ENCODE measurements at regions of chr11 and their contacts with region 1.

Region 1: DNA sequence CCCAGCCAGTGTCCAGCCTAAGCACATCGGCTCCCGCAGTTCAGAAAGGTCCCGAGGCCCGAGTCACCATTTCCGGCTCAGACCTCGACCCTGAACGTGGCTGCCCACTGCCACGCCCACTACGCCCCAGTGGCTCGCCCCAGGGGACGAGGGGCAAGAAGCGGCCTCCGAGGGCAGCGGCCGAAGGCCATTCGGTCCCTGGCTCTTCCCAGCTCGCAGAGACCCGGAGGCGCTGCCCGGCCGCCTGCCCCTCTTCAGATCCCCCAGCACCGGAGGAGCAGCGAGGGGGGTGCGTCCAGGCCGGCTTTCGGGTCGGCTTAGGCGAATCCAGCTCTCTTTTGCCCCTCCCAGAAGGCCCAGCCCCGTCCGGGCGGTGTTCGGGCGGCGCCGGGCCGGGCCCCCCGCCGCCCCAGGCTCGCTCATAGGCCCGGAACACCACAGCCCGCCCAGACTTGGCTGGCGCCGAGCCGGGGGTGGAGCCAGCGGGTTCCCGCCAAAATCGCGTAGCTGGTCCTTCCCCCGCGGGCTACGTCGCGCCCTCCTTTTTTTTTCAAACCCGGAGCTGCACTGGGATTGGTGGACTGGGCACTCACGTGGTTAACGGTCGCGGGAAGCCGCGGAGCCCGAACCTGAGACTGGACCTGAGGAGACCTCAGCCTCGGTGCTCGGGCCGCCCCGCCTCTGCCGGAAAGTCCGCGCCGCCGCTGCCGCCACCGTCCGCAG is at the start of gene WEE1:
- DNase-seq: peak; percentile 99
- ATAC-seq: peak; percentile 94
- H3K4me3 Mint-ChIP-seq: peak within 1 kb of the TSS; percentile 94
- H3K27ac Mint-ChIP-seq: peak within 1 kb of the TSS; percentile 82
- H3K4me1 Mint-ChIP-seq: peaks cover 33% of the 10 kb centered on the region
- H3K27me3 Mint-ChIP-seq: peaks cover 3% of the 10 kb centered on the region
- total RNA-seq, gene WEE1: 44.8 to 46.5 TPM

Region 2: GRCh38 chr11:8682303-8683114 is 890.7 kb before region 1 on chr11 and contains the starts of genes RPL27A and TRIM66:
- CTCF ChIA-PET with region 1: no interaction called
- POLR2A ChIA-PET with region 1: no interaction called
- intact Hi-C with region 1: loop called in 1 of 2 experiments (anchors 1 kb)
- DNase-seq: peak; percentile 99
- ATAC-seq: peak; percentile 96
- H3K4me3 Mint-ChIP-seq: peak within 1 kb of the TSS; percentile 97
- H3K27ac Mint-ChIP-seq: peak within 1 kb of the TSS; percentile 98
- H3K4me1 Mint-ChIP-seq: peaks cover 46% of the 10 kb centered on the region
- H3K27me3 Mint-ChIP-seq: no peaks in the 10 kb centered on the region
- total RNA-seq, gene RPL27A: 688 to 1,021 TPM
- total RNA-seq, gene TRIM66: 18.3 to 19.5 TPM

Region 3: GRCh38 chr11:9314291-9315036 is 258.7 kb before region 1 on chr11 and contains the start of gene TMEM41B:
- CTCF ChIA-PET with region 1: no interaction called
- POLR2A ChIA-PET with region 1: interaction called, 5 read pairs
- intact Hi-C with region 1: loop called in 1 of 2 experiments (anchors 1 kb)
- DNase-seq: peak; percentile 100
- ATAC-seq: peak; percentile 95
- H3K4me3 Mint-ChIP-seq: peak within 1 kb of the TSS; percentile 99
- H3K27ac Mint-ChIP-seq: peak within 1 kb of the TSS; percentile 99
- H3K4me1 Mint-ChIP-seq: peaks cover 36% of the 10 kb centered on the region
- H3K27me3 Mint-ChIP-seq: peaks cover 11% of the 10 kb centered on the region
- total RNA-seq, gene TMEM41B: 20.2 to 29.3 TPM

Region 4: DNA sequence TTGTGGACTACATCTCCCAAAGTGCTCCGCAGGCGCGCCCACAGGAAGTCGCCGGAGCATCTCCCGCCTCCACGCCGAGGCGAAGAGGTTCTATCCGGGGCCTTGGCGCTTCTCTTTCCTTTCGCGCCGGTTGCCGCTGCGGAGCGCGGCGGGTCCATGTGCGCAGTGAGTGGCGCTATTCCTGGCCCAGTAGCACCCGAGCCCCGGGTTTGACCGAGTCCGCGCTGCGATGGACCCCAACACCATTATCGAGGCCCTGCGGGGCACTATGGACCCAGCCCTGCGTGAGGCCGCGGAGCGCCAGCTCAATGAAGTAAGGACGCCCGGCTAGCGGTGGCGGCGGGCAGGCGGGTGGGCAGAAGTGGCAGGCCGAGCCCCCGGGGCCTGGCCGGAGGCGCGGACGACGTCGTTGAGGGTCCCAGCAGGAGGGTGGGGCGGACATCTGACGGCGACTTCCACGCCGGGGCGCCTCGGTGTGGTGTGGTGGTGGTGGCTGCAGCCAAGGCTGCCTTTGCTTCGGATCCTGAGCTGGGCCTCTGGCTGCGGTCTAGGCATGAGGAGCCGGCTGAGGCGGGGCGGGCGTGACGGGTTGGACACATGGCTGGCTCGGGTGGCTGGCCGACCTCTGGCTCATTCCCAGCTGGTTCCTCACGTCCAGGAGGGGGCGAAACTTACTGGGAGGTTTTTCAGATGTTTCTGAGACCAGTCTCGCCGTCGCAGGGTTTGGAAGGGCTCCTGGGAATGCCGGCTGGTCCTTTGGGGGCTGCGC is 188.5 kb before region 1 on chr11 and contains the start of gene IPO7:
- CTCF ChIA-PET with region 1: no interaction called
- POLR2A ChIA-PET with region 1: interaction called, 4 read pairs
- intact Hi-C with region 1: loop called in 1 of 2 experiments (anchors 2 kb)
- DNase-seq: peak; percentile 96
- ATAC-seq: peak; percentile 98
- H3K4me3 Mint-ChIP-seq: peak within 1 kb of the TSS; percentile 96
- H3K27ac Mint-ChIP-seq: peak within 1 kb of the TSS; percentile 96
- H3K4me1 Mint-ChIP-seq: peaks cover 26% of the 10 kb centered on the region
- H3K27me3 Mint-ChIP-seq: no peaks in the 10 kb centered on the region
- total RNA-seq, gene IPO7: 155 to 181 TPM

Region 5: DNA sequence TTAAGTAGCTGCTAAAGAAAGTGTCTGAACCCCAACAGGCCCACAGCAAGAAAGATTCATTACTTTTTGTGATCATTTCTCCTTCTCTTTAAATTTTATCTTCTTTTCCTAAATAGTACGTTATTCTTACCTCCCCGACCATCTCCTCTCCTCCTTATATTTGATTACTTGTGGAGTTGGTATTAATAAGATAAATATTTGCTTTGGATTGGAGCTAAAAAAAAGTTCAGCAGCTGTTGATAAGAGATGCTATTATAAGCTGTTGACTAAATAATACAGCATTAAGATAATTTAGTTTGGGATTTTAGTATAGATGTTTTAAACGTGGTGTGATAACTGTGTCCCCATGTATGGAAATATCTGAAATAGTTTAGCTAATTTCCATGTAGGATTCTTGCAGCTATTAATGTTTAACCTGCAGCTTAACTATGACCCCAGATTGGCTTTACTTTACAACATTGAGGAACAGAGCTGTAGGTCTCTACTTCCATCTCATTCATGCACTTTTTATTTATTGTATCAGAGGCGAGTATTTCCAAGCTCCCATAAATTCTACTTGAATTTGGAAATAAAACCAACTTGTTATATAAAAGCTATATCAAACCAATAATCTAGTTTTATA is 74.6 kb before region 1 on chr11:
- CTCF ChIA-PET with region 1: no interaction called
- POLR2A ChIA-PET with region 1: no interaction called
- intact Hi-C with region 1: no loop called
- DNase-seq: no peak
- ATAC-seq: no peak
- H3K4me3 Mint-ChIP-seq: no peak overlapping the region
- H3K27ac Mint-ChIP-seq: no peak overlapping the region
- H3K4me1 Mint-ChIP-seq: no peaks in the 10 kb centered on the region
- H3K27me3 Mint-ChIP-seq: no peaks in the 10 kb centered on the region

Region 6: GRCh38 chr11:9601037-9601875 is 28.0 kb after region 1 on chr11:
- CTCF ChIA-PET with region 1: interaction called, 5 read pairs
- POLR2A ChIA-PET with region 1: interaction called, 8 read pairs
- intact Hi-C with region 1: loop called in 1 of 2 experiments (anchors 1 kb)
- DNase-seq: peak; percentile 86
- ATAC-seq: peak; percentile 89
- H3K4me3 Mint-ChIP-seq: peak overlapping the region; percentile 65
- H3K27ac Mint-ChIP-seq: peak overlapping the region; percentile 91
- H3K4me1 Mint-ChIP-seq: peaks cover 25% of the 10 kb centered on the region
- H3K27me3 Mint-ChIP-seq: no peaks in the 10 kb centered on the region

Region 7: DNA sequence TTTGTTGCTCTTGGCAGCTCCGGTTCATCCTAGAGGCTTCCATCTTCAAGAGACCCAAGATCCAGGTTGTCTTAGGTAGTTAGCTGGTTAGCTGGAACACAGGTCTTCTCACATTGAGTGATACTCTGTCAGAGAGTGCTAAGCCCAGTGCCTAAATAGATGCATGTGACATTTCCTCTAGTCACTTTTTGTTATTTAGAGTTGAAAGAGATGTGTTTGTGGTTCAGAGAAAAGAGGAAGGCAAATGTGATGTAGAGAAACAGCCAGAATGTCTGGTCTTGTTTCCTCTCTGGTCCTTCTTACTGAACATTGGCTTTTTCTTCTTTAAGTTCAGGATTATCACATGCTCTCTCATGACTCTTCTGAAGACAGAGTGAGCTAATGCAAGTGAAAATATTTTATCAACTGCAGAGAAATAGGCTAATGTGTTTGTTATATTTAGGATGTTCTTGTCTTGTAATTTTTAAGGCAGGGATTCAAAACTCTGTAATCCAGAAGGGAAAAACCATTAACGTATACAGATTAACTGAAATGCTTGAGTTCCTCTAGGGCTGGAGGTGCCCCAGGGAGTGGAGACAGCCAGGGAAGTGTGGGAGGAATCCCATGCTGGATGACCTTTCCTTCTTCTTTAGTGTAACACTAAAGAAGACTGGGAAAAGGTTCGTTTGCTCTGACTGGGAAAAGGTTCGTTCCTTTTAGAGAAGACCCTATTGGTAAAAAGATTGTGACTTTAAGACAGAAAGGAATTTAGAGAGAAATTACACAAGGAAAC is 166.1 kb after region 1 on chr11:
- CTCF ChIA-PET with region 1: no interaction called
- POLR2A ChIA-PET with region 1: interaction called, 10 read pairs
- intact Hi-C with region 1: no loop called
- DNase-seq: no peak
- ATAC-seq: peak; percentile 78
- H3K4me3 Mint-ChIP-seq: no peak overlapping the region
- H3K27ac Mint-ChIP-seq: peak overlapping the region; percentile 9
- H3K4me1 Mint-ChIP-seq: peaks cover 10% of the 10 kb centered on the region
- H3K27me3 Mint-ChIP-seq: no peaks in the 10 kb centered on the region

Measured in activated CD4-positive, alpha-beta T cell treated with anti-CD3 and anti-CD28 coated beads for 36 hours (primary cell).